Lower leg skin (tissue), 4 donors: ENCODE measurements at regions of chr5 and their contacts with region 1.

Region 1: GRCh38 chr5:160453751-160454150 is 32.1 kb downstream of the PTTG1 start:
- DNase-seq: no peak
- H3K4me3 ChIP-seq: no peak overlapping the region
- CTCF ChIP-seq: no peak
- POLR2A ChIP-seq: no peak

Region 2: DNA sequence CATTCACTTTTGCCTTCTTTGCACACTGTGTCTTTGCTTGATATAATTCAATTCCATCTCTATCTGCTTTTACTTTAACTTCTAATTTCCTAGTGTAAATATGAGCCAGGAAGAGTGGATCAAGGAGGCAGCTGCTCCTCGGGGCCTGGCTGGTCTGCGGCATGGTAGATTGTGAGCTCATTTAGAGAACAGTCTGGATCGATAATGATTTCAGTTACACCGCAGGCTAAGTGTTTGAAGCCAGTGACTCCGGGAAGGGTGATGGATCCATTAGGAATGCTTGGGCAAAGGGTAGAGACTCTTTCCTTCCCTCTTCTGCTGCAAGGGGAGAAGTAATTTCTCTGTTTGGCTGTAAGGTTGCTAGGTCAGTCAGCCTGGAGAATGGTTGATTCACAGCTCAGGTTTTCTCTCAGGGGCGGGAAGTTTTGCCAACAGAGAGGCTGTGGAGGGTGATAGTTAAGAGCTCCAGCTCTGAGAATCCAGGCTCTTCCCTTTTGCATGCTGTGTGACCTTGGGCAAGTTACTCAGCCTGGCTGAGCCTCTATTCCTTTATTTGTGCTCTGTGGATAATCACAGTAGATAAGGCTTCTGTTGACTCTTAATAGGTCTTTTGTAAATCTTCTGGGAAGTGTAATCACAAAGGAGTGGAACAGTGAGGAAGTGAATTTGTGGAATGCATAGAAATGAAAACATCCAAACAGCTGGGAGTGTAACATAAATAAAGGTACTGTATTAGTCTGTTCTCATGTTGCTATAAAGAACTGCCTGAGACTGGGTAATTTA is 67.0 kb after region 1 on chr5:
- intact Hi-C with region 1: loop called (anchors 2 kb)
- DNase-seq: no peak
- H3K4me3 ChIP-seq: no peak overlapping the region
- CTCF ChIP-seq: no peak
- POLR2A ChIP-seq: no peak